Right lobe of liver (tissue), 6 donors: ENCODE measurements at regions of chr1 and their contacts with region 1.

Region 1: DNA sequence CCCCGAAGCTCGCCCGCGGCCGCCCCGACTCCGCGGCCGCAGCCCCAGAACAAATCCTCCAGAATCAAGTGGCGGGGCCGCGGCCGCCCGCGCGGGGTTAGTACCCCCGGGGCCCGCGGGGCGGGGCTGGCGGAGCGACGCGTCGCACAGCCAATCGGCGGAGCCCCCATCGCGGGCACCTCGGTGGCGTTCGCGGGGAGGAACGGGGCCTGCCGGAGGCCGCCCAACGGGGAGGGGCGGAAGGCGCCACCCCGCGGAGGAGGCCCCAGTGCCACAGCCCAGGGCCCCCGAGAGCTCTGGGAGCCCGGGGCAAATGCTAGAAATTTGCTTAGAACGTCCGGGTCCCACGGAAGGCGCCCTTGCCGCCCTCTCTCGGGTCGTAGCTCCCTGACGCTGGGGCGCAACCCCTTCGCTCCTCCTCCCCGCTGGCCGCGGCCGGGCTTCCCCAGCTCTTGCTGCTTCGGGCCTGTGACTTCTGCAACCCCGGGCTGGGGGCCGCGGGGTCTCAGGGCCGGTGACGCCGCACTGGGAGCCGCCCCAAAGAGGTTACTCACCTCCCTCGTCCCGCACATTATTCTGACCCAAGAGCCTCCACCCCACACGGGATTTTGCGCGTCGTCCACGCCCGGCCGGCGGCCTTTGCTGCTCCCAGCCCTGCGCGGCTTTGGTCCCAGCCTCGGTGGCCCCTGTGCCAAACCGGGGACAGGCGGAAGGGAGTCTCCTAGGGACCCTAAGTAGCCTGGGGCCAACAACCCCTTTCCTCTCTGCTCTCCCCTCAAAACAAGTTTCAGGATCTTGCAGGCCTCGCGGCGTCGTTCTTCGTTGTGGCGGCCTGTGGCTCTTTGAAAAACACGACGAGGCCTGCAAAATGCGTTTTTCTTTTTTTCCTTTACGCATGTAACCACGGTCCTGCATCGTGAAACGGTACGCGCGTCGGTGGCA is at the start of gene RUNX3:
- DNase-seq: peak; percentile 54 to 83 (median 80)
- ATAC-seq: peak; percentile 66 to 79 (median 68)
- H3K4me3 ChIP-seq: peak within 1 kb of the TSS; percentile 25 to 43 (median 33)
- H3K27ac ChIP-seq: peak within 1 kb of the TSS in 2 of 3 donors; percentile 51 to 53
- H3K4me1 ChIP-seq: peaks cover 0 to 12% (median 6%) of the 10 kb centered on the region in 4 donors
- H3K27me3 ChIP-seq: peaks cover 5 to 64% of the 10 kb centered on the region in 2 donors
- CTCF ChIP-seq: no peak
- POLR2A ChIP-seq: no peak
- total RNA-seq, gene RUNX3: 0.46 to 3.1 (median 0.84) TPM

Region 2: DNA sequence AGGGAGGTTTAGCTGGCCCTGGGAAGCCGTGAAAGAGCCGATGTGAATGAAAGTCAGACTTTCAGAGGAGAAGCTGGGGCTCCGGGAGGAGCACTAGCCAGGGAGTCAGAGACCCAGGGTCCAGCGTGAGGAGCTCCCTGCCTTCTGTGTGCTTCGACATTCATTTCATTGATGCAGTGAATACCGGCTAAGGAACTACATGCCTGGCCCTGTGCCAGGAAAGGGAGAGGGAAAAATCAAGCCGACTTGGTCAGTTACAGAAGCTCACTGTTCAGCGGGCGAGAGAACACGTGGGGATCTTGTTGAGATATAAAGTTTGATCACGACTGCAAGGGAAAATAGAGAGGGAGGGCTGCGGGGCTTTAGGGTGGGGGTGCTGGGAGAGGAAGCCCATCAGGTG is 76.3 kb after region 1 on chr1:
- intact Hi-C with region 1: no loop called
- DNase-seq: no peak
- ATAC-seq: no peak
- H3K4me3 ChIP-seq: no peak overlapping the region
- H3K27ac ChIP-seq: no peak overlapping the region
- H3K4me1 ChIP-seq: no peaks in the 10 kb centered on the region
- H3K27me3 ChIP-seq: no peaks in the 10 kb centered on the region
- CTCF ChIP-seq: no peak
- POLR2A ChIP-seq: no peak

Region 3: GRCh38 chr1:25022361-25023189 is 92.1 kb after region 1 on chr1:
- intact Hi-C with region 1: loop called in 1 of 2 experiments (anchors 10 kb)
- DNase-seq: peak; percentile 64 to 79 (median 79)
- ATAC-seq: peak; percentile 68 to 77 (median 74)
- H3K4me3 ChIP-seq: no peak overlapping the region
- H3K27ac ChIP-seq: peak overlapping the region in 1 of 3 donors; percentile 33
- H3K4me1 ChIP-seq: no peaks in the 10 kb centered on the region
- H3K27me3 ChIP-seq: no peaks in the 10 kb centered on the region
- CTCF ChIP-seq: no peak
- POLR2A ChIP-seq: no peak

Region 4: DNA sequence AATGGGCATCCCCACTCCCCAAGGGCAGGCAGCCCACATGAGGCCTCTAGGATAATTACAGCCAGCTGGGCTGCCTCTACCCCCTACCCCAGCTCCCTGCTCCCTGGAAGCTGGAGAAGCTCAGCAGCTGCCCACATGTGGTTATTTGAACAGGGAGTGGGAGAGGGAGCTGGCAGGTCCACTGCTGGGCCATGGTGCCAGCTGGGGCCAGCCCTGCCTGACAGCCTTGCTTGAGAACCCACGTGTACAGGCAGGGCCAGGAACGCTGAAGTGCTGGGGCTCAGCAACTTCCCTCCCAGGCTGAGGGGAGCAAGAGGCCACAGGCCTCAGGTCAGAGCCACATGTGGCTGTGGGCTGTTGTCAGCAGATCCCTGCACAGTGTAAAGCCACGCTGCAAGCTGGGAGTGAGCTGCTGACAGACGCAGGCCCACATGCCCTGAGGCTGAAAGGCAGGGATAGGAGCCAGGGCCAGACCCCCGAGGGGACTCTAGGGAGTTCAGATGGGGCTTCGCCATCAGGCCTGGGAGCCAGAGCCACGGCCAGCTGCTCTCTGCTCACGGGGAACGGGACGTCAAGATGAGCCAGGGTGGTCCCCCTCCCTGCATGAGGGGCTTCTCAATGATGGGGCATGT is 172.8 kb after region 1 on chr1:
- intact Hi-C with region 1: loop called in 1 of 2 experiments (anchors 5 kb)
- DNase-seq: no peak
- ATAC-seq: no peak
- H3K4me3 ChIP-seq: no peak overlapping the region
- H3K27ac ChIP-seq: no peak overlapping the region
- H3K4me1 ChIP-seq: no peaks in the 10 kb centered on the region
- H3K27me3 ChIP-seq: no peaks in the 10 kb centered on the region
- CTCF ChIP-seq: no peak
- POLR2A ChIP-seq: no peak